SK-N-SH (cell line): ENCODE measurements at regions of chr11 and their contacts with region 1.

Region 1: GRCh38 chr11:113532697-113533424 is 57.7 kb upstream of the DRD2 start:
- DNase-seq: peak; percentile 80
- H3K4me3 ChIP-seq: peak overlapping the region in 1 of 2 experiments; percentile 37; a peak in 1 of 4 replicates
- H3K27ac ChIP-seq: no peak overlapping the region
- H3K4me1 ChIP-seq: peaks cover 0 to 5% of the 10 kb centered on the region in 2 experiments; a peak in 1 of 4 replicates
- H3K27me3 ChIP-seq: no peaks in the 10 kb centered on the region; the same call in 1 of the 2 replicates
- CTCF ChIP-seq: peak; percentile 92
- EP300 ChIP-seq: no peak
- RAD21 ChIP-seq: peak; percentile 88

Region 2: GRCh38 chr11:112844517-112844916 is 688.3 kb before region 1 on chr11:
- CTCF ChIA-PET with region 1: no interaction called
- POLR2A ChIA-PET with region 1: no interaction called
- DNase-seq: no peak
- H3K4me3 ChIP-seq: no peak overlapping the region
- H3K27ac ChIP-seq: no peak overlapping the region
- H3K4me1 ChIP-seq: no peaks in the 10 kb centered on the region; a peak in 1 of 4 replicates
- H3K27me3 ChIP-seq: no peaks in the 10 kb centered on the region
- CTCF ChIP-seq: no peak
- EP300 ChIP-seq: no peak
- RAD21 ChIP-seq: no peak

Region 3: GRCh38 chr11:113305440-113306336 is 227.2 kb before region 1 on chr11:
- CTCF ChIA-PET with region 1: interaction called, 48 read pairs
- POLR2A ChIA-PET with region 1: no interaction called
- DNase-seq: peak; percentile 81
- H3K4me3 ChIP-seq: peak overlapping the region in 1 of 2 experiments; percentile 14; a peak in 1 of 4 replicates
- H3K27ac ChIP-seq: no peak overlapping the region
- H3K4me1 ChIP-seq: peaks cover 0 to 2% of the 10 kb centered on the region in 2 experiments; a peak in 1 of 4 replicates
- H3K27me3 ChIP-seq: no peaks in the 10 kb centered on the region
- CTCF ChIP-seq: peak; percentile 94
- EP300 ChIP-seq: no peak
- RAD21 ChIP-seq: peak; percentile 99

Region 4: DNA sequence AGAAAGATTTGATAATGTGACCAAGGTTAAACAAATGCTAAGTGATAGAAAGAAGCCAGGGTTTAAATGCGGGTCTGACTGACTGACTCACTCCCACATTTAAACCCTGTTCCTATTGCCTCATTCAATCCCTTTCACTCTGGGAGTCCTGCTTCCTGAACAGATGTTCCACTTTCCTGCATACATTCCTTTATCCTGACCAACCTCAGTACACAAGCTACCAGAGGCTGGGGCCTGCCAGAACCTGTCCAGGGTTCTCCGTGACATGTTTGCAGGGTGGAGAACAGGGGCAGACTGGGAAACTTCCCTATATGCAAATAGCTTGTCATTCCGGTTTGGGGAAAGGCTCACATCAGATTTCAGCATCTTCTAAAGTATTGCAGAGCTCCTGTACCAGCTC is 148.3 kb before region 1 on chr11:
- CTCF ChIA-PET with region 1: no interaction called
- POLR2A ChIA-PET with region 1: no interaction called
- DNase-seq: no peak
- H3K4me3 ChIP-seq: no peak overlapping the region
- H3K27ac ChIP-seq: no peak overlapping the region
- H3K4me1 ChIP-seq: no peaks in the 10 kb centered on the region
- H3K27me3 ChIP-seq: no peaks in the 10 kb centered on the region
- CTCF ChIP-seq: no peak
- EP300 ChIP-seq: peak in 1 of 2 experiments; percentile 45; a peak in 1 of 4 replicates
- RAD21 ChIP-seq: no peak

Region 5: DNA sequence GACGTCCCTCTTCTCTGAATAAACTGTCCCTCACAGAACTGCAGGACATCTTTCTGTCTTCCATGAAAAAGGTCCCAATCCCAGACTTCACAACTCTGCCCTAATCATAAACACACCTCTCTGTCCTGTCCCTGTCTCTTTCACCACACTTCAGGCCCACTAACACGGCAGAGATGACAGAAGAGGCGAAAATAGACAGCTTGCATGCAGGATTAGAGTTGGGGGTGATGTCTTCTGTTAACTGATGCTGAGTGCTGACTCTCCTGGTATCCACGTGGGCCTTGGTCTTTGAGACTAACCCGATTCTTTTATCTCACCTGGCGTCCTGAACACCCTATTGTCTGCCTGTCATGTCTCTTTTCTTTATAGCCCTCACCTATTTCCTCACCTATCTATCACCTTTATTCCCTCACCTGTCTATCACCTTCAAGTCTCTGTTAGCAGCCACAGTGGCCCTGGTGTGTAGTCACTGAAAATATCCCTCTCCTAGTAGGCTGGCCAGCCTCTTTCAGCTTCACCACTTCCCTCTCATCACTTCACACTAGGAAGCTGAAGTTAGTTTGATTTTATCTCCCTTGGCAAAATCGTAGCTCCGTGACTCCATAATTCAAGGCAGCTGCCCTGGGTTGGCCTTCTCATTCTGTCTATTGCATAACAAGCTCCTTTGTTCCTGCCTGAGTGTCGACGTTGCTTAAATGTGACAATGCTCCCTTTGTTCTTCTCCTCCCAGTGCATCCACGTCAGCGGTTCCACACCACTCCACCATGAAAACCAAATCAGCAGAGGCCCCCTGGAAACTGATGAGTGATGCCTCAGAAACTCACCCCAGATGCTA is 27.1 kb before region 1 on chr11:
- CTCF ChIA-PET with region 1: interaction called, 17 read pairs
- POLR2A ChIA-PET with region 1: no interaction called
- DNase-seq: peak; percentile 33
- H3K4me3 ChIP-seq: no peak overlapping the region
- H3K27ac ChIP-seq: no peak overlapping the region
- H3K4me1 ChIP-seq: peaks cover 6 to 11% of the 10 kb centered on the region in 2 experiments; a peak in 2 of 4 replicates
- H3K27me3 ChIP-seq: no peaks in the 10 kb centered on the region
- CTCF ChIP-seq: no peak
- EP300 ChIP-seq: no peak
- RAD21 ChIP-seq: no peak

Region 6: DNA sequence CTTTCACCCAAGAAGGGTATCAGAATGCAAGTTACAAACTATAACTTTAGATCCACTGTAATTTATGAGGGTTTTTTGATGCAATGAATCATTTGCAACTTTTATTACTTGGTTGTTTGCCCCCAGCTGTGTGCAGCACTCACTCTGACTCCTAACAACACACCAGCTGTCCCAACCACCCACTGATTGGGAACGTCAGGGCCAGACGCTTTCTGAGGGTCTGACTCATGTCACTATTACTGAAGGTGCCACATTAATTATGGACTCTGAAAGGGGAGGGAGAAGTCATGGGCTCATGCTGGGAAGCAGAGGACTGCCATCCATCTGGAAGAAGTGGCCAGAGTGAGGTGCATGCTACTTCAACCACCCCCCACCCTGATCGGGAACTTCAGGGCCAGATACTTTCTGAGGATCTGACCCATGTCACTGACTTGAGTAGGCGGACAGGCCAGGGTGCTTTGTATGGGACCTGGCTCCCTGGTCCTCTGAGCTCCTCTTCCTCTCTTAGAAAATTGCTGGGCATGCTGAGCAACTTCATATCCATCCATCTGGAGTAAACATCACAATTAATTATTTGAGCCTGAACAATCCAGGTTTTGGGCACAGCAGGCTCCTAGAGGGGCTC is 12.8 kb before region 1 on chr11:
- CTCF ChIA-PET with region 1: interaction called, 45 read pairs
- POLR2A ChIA-PET with region 1: no interaction called
- DNase-seq: no peak
- H3K4me3 ChIP-seq: no peak overlapping the region
- H3K27ac ChIP-seq: no peak overlapping the region
- H3K4me1 ChIP-seq: peaks cover 0 to 4% of the 10 kb centered on the region in 2 experiments; a peak in 1 of 4 replicates
- H3K27me3 ChIP-seq: no peaks in the 10 kb centered on the region
- CTCF ChIP-seq: no peak
- EP300 ChIP-seq: no peak
- RAD21 ChIP-seq: no peak

Region 7: DNA sequence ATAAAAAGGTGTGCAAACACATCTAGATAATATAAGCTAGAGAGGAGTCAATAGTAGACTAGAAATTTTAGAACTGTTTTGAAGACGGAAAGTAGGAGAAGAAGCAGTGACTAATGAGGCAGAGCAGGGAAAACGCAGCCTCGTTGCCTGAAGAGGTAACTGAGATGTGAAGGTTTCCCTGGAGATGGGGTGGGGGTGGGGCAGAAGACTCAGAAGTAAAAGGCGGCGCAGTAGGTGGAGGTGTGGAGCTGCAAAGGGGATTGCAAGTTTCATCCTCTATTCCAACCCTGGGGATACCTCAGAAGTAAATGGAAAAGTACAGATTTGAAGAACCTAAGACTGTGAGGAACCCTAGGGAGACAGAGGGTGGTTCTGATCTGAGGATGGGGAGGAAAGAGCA is 63.8 kb after region 1 on chr11:
- CTCF ChIA-PET with region 1: no interaction called
- POLR2A ChIA-PET with region 1: no interaction called
- DNase-seq: no peak
- H3K4me3 ChIP-seq: no peak overlapping the region
- H3K27ac ChIP-seq: no peak overlapping the region
- H3K4me1 ChIP-seq: peaks cover 0 to 6% of the 10 kb centered on the region in 2 experiments; a peak in 2 of 4 replicates
- H3K27me3 ChIP-seq: no peaks in the 10 kb centered on the region
- CTCF ChIP-seq: no peak
- EP300 ChIP-seq: no peak
- RAD21 ChIP-seq: no peak

Region 8: DNA sequence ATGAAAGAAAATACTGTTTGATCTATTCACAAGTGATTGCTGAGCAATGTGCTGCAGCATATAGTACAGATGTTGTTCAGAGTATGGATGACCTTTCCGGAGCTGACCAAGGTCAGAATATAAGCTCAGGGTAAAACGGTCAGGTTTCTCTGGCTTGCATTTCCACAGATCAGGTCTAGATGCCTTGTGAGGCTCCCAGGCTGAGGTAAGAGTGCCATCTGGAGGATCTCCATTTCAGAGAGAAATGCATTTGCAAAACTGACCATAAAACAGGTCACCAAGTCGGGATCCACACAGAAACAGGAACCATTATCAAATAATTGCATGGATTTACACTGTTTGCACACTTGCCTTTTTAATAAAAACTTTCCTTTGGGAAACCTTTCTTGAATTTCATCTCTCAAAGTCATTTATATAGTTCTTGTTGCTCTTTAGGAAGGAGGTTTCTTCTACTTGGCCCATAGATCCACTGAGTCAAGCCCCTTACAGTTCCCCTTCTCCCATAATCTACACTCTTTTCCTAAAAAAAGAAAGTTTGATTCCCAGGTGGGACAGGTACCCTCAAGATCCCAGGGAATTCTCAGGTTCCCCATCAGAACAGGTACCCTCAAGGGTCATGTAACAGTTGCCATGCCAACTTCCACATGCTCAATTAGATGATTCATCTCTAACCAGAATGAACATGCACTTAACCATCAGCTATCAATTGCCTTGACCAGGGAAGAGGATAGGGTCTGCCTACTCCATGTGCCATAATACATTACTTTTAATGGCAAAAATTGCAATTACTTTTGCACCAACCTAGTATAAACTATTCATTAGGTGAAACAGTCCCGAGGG is 198.2 kb after region 1 on chr11:
- CTCF ChIA-PET with region 1: interaction called, 61 read pairs
- POLR2A ChIA-PET with region 1: no interaction called
- DNase-seq: peak; percentile 62
- H3K4me3 ChIP-seq: no peak overlapping the region
- H3K27ac ChIP-seq: peak overlapping the region in 1 of 2 experiments; percentile 9; a peak in 1 of 4 replicates
- H3K4me1 ChIP-seq: peaks cover 0 to 2% of the 10 kb centered on the region in 2 experiments; a peak in 2 of 4 replicates
- H3K27me3 ChIP-seq: no peaks in the 10 kb centered on the region
- CTCF ChIP-seq: peak; percentile 57
- EP300 ChIP-seq: no peak
- RAD21 ChIP-seq: peak; percentile 99